ENCODE measurements at regions of chr7 and their contacts with region 1.

Region 1: DNA sequence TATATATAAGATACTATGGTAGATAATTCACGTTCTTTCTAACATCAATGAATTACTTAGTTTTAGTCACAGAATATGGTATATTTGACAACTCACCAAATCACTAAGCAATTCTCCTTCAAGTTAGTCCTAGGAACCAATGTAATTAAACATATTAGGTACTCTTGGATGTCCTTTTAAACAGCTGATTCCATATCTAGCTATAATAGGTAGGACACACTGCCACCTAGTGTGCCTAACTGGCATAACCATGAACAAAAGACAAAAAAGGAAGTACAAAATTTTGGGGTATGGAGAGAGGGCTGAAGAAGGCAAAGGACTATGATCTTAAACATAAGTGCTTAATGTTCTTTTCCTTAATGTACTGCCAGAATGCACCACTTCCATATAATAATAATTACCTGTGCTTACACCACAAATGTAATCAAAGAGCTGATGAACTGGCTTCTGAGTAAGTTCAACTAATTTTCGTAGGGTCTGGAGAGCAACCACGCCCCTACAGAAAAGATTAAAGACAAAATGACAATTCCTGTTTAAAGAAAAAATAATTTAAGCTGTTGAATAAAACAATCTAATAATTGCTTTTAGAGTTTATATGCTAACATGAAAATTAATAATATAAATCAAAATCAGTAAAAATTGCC is 28.7 kb downstream of the PNPLA8 start:
- DNase-seq: peak; percentile 77
- H3K4me3 ChIP-seq: no peak overlapping the region
- H3K27ac ChIP-seq: no peak overlapping the region
- H3K4me1 ChIP-seq: no peaks in the 10 kb centered on the region
- H3K27me3 ChIP-seq: no peaks in the 10 kb centered on the region
- CTCF ChIP-seq: peak; percentile 90

Region 2: DNA sequence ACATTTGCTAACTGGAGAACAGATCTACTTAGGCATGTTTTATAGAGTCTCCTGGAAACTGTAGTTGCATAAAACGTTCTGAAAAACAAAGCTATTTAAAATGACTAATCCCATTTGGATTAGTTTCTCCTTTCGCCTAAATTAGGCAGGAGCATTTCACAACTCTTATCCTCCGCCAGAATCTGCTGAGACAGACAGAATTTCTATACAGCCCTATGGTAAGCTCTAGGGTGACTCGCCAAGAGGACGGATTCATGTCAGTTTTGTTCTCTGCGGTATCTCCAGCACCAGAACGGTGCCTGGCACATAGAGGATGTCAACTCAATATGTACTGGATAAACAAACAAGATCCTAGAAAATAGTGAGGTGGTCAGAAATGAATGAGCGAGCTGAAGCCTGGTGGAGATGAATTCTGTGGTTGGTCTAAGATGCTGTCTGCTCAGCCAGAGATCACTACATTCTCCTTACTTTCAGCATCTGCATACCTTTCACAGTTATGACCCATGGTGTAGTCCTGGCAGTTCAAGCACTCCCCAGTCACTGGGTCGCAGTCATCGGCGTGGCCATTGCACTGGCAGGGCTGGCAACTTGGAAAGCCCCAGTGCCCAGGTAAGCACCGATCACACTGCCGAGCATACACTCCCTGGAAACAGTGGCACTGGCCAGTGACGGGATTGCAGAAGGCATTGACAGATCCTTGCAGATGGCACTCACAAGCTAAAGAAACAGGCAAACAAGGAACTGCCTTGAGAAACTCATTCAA is 538.3 kb before region 1 on chr7:
- CTCF ChIA-PET with region 1: no interaction called
- POLR2A ChIA-PET with region 1: no interaction called
- intact Hi-C with region 1: no loop called
- DNase-seq: peak; percentile 87
- H3K4me3 ChIP-seq: no peak overlapping the region
- H3K27ac ChIP-seq: peak overlapping the region; percentile 8
- H3K4me1 ChIP-seq: peaks cover 29% of the 10 kb centered on the region
- H3K27me3 ChIP-seq: no peaks in the 10 kb centered on the region
- CTCF ChIP-seq: no peak

Region 3: DNA sequence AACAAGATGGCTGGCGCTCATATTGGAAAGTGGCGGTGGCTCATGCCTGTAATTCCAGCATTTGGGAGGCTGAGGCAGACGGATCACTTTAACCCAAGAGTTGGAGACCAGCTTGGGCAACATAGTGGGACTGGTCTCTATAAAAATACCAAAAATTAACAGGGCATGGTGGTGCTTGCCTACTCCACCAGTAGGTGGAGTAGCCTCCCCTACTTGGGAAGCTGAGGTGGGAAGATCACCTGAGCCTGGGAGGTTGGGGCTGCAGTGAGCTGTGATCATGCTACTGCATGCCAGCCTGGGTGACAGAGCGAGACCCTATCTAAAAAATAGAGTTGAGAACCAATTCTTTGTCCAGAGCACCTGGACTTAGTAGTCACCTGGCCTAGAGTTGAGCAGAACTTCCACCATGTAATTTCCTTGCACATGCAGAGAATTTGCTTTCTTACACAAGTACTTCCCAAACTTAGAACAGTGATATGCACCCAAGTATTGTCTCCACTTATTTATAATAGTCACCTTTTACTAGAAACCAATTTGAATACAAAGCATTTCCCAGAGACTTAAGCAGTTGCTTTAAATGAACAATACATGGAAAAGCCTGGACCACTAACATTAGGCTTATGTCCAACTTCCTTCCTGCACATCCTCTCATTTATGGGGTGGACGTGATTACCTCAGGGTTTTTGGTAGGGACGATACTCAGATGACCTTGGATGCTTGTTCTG is 382.9 kb before region 1 on chr7:
- CTCF ChIA-PET with region 1: no interaction called
- POLR2A ChIA-PET with region 1: no interaction called
- intact Hi-C with region 1: loop called (anchors 1 kb)
- DNase-seq: peak; percentile 25
- H3K4me3 ChIP-seq: no peak overlapping the region
- H3K27ac ChIP-seq: no peak overlapping the region
- H3K4me1 ChIP-seq: no peaks in the 10 kb centered on the region
- H3K27me3 ChIP-seq: no peaks in the 10 kb centered on the region
- CTCF ChIP-seq: peak; percentile 75

Region 4: GRCh38 chr7:108442039-108442568 is 55.1 kb before region 1 on chr7:
- CTCF ChIA-PET with region 1: interaction called, 11 read pairs
- POLR2A ChIA-PET with region 1: no interaction called
- intact Hi-C with region 1: no loop called
- DNase-seq: peak; percentile 40
- H3K4me3 ChIP-seq: no peak overlapping the region
- H3K27ac ChIP-seq: no peak overlapping the region
- H3K4me1 ChIP-seq: peaks cover 32% of the 10 kb centered on the region
- H3K27me3 ChIP-seq: no peaks in the 10 kb centered on the region
- CTCF ChIP-seq: no peak

Region 5: DNA sequence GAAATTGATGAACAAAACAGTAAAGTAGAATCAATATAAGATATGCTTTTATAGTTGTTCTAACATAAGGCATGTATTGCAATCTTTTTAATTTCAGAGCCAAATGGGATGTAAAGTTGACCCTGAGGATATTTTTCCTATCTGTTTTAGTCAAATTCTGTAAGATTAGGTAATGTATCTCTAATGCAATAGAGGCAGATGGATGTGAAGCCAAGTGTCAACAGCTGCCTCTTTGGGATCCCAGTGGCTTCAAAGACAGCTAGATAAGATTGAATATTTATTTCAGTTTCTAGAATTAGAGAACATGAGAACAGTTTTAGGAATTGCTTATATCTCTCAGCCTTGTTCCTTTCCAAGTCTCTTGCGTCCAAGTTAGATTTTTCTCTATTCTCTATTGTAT is 280.8 kb after region 1 on chr7:
- CTCF ChIA-PET with region 1: no interaction called
- POLR2A ChIA-PET with region 1: no interaction called
- intact Hi-C with region 1: no loop called
- DNase-seq: no peak
- H3K4me3 ChIP-seq: no peak overlapping the region
- H3K27ac ChIP-seq: no peak overlapping the region
- H3K4me1 ChIP-seq: peaks cover 15% of the 10 kb centered on the region
- H3K27me3 ChIP-seq: no peaks in the 10 kb centered on the region
- CTCF ChIP-seq: no peak

Measured in A673 (cell line).